GM10248 (cell line): ENCODE measurements at regions of chr1 and their contacts with region 1.

Region 1: GRCh38 chr1:202716654-202717053 is 6.4 kb upstream of the SYT2 start:
- DNase-seq: no peak
- CTCF ChIP-seq: no peak

Region 2: DNA sequence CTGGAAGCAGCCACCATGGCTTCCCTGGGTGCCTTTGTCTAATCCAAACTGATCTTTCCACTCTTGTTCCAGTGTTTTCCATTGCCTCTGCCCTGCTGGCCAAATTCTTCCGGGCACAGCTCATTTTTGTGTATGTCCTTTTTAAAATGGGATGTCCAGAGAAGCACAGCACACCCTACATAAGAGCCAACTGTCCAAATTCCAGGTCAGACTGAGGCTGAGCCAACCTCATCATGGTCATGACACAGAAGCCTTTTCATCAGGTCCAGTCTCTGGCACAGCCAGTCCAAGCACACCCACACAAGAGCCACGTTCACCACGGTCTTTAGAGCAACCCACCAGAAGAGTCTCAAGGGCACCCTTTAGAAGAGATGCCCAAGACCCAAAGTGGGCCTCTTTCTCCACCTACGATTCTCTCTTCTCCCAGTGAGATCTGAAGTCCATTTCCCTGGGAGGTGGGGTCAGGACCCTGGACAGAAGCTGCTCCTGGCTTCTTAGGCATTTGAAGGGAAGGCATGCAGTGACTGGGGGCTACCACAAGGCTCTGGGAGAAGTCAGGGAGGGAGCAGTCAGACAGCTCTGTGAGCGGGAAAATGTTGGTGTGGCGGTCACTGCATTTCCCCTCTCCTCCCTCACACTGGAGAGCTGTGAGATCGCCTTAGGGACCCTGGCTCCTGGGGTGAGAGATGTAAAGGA is 59.6 kb before region 1 on chr1:
- CTCF ChIA-PET with region 1: interaction called, 13 read pairs
- POLR2A ChIA-PET with region 1: no interaction called
- DNase-seq: no peak
- CTCF ChIP-seq: no peak